OCI-LY7 (cell line): ENCODE measurements at regions of chr3 and their contacts with region 1.

Region 1: DNA sequence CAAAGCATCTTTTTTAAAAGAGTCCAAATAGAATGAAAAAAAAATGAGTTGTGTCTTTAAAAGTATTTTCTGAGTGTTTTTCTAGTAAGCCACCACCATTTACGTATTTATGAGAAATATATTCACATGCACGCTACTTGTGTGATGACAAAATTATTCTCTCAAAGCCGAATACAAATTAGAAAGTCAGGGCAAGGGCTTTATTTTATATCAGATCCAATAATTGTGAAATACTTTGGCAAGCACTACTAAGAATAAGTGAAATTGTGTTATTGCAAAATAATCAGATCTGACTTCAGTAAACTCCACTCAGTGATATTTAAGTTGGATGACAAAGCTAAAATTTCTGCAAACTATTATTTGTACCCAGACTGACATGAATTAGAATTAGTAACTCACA is 589.3 kb upstream of the KCNMB2 start:
- DNase-seq: no peak
- H3K4me3 ChIP-seq: no peak overlapping the region
- H3K27ac ChIP-seq: no peak overlapping the region
- H3K4me1 ChIP-seq: peaks cover 5% of the 10 kb centered on the region
- CTCF ChIP-seq: no peak

Region 2: GRCh38 chr3:176814285-176814684 is 1132.7 kb before region 1 on chr3:
- CTCF ChIA-PET with region 1: no interaction called
- POLR2A ChIA-PET with region 1: interaction called, 10 read pairs
- intact Hi-C with region 1: no loop called
- DNase-seq: peak; percentile 68
- H3K4me3 ChIP-seq: no peak overlapping the region
- H3K27ac ChIP-seq: no peak overlapping the region
- H3K4me1 ChIP-seq: no peaks in the 10 kb centered on the region
- CTCF ChIP-seq: peak; percentile 83

Region 3: GRCh38 chr3:177934001-177934891 is 12.7 kb before region 1 on chr3:
- CTCF ChIA-PET with region 1: no interaction called
- POLR2A ChIA-PET with region 1: interaction called, 11 read pairs
- intact Hi-C with region 1: no loop called
- DNase-seq: no peak
- H3K4me3 ChIP-seq: no peak overlapping the region
- H3K27ac ChIP-seq: no peak overlapping the region
- H3K4me1 ChIP-seq: no peaks in the 10 kb centered on the region
- CTCF ChIP-seq: no peak